IMR-90 (cell line): ENCODE measurements at regions of chr2 and their contacts with region 1.

Region 1: DNA sequence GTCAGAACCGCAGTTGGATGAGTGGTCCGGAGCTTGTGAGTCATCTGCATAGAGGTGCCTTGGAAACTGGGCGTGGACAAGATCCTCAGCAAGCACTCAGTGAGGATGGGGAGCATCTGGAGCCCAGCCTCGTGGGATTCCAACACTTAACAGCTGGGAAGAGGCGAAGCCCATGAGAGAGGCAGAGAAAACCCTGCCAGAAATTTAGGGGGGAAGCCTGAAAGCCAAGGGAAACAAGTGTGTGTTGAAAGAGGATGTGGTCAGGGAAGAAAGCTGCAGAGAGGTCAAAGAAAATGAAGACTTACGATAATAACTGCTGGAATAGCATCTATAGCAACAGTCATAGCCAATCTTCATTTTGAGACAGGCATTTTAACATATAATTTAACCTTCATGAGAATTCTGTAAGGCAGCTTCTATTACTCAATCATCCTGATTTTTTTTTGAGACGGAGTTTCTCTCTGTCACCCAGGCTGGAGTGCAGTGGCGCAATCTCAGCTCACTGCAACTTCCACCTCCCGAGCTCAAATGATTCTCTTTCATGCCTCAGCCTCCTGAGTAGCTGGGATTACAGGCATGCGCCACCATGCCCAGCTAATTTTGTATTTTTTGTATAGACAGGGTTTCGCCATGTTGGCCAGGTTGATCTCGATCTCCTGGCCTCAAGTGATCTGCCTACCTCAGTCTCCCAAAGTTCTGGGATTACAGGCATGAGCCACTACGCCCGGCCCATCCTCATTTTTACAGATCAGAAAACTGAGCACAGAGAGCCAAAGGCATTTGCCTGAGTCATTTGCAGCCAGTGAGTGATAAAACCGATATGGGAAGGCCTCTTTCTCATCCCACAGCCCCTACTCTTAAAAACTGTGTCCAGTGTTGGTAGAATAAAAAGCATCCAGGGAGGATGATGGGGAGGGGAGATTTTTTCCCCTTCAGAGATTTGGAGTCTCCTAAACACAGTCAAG is 214.4 kb upstream of the EPAS1 start:
- DNase-seq: peak; percentile 88
- ATAC-seq: peak; percentile 63
- H3K4me3 ChIP-seq: no peak overlapping the region
- H3K27ac ChIP-seq: peak overlapping the region; percentile 10; the same call in 1 of the 2 replicates
- H3K4me1 ChIP-seq: peaks cover 7% of the 10 kb centered on the region
- H3K27me3 ChIP-seq: no peaks in the 10 kb centered on the region
- CTCF ChIP-seq: no peak
- POLR2A ChIP-seq: no peak
- RAD21 ChIP-seq: no peak

Region 2: DNA sequence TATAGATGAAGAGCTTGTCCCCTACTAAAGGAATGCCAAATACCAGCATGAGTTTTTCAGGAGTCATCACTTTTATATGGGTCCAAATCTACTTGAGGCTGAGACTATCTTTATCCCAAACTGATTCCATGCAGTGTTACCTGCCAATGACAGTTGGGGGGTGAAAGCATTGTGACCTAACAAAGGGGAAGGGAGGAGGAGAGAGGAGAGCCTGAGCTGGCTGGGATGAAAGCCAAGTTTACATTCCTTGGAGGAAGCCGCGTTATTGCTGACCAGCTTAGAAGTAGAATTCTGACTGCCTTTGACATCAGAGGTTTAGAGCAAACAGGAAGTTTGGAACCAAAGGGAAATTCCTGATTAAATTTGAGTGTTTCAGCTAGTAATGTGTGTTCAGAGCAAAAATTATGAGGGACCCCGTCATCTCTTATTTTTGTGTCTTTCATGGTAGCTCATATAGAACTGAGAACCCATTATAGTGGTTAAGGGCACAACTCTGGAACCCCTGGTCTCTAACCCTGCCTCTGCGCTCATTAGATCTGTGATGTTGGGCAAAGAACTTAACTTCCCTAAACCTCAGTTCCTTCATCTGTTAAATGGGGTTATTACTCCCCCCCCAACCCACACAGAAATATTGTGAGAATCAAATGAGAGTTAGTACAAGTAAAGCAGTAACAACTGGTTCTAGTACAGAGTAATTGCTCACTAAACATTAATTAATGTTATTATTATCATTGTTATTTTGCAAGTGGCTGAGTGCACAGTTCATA is 15.1 kb after region 1 on chr2:
- CTCF ChIA-PET with region 1: interaction called, 3 read pairs
- POLR2A ChIA-PET with region 1: no interaction called
- dilution Hi-C with region 1: no loop called
- in situ Hi-C with region 1: no loop called
- intact Hi-C with region 1: loop called (anchors 2 kb)
- DNase-seq: peak; percentile 100
- ATAC-seq: peak; percentile 80
- H3K4me3 ChIP-seq: no peak overlapping the region
- H3K27ac ChIP-seq: peak overlapping the region; percentile 85; the same call in 1 of the 2 replicates
- H3K4me1 ChIP-seq: peaks cover 12% of the 10 kb centered on the region
- H3K27me3 ChIP-seq: no peaks in the 10 kb centered on the region
- CTCF ChIP-seq: no peak
- POLR2A ChIP-seq: no peak
- RAD21 ChIP-seq: peak; percentile 19

Region 3: GRCh38 chr2:46164581-46165301 is 81.9 kb after region 1 on chr2:
- CTCF ChIA-PET with region 1: no interaction called
- POLR2A ChIA-PET with region 1: no interaction called
- dilution Hi-C with region 1: no loop called
- in situ Hi-C with region 1: no loop called
- intact Hi-C with region 1: no loop called
- DNase-seq: peak; percentile 96
- ATAC-seq: peak; percentile 85
- H3K4me3 ChIP-seq: no peak overlapping the region
- H3K27ac ChIP-seq: peak overlapping the region; percentile 27; the same call in 1 of the 2 replicates
- H3K4me1 ChIP-seq: peaks cover 26% of the 10 kb centered on the region
- H3K27me3 ChIP-seq: no peaks in the 10 kb centered on the region
- CTCF ChIP-seq: no peak
- POLR2A ChIP-seq: no peak
- RAD21 ChIP-seq: no peak